Uterus (tissue), 4 donors: ENCODE measurements at regions of chr7 and their contacts with region 1.

Region 1: GRCh38 chr7:85614684-85615083 is 427.8 kb upstream of the SEMA3D start:
- DNase-seq: peak in 1 of 2 donors; percentile 12
- H3K4me3 ChIP-seq: no peak overlapping the region
- H3K27ac ChIP-seq: no peak overlapping the region
- H3K4me1 ChIP-seq: no peaks in the 10 kb centered on the region
- H3K27me3 ChIP-seq: no peaks in the 10 kb centered on the region
- CTCF ChIP-seq: no peak
- POLR2A ChIP-seq: no peak

Region 2: GRCh38 chr7:83970081-83970480 is 1644.6 kb before region 1 on chr7:
- intact Hi-C with region 1: loop called (anchors 5 kb)
- DNase-seq: no peak
- H3K4me3 ChIP-seq: no peak overlapping the region
- H3K27ac ChIP-seq: no peak overlapping the region
- H3K4me1 ChIP-seq: no peaks in the 10 kb centered on the region
- H3K27me3 ChIP-seq: no peaks in the 10 kb centered on the region
- CTCF ChIP-seq: no peak
- POLR2A ChIP-seq: no peak

Region 3: DNA sequence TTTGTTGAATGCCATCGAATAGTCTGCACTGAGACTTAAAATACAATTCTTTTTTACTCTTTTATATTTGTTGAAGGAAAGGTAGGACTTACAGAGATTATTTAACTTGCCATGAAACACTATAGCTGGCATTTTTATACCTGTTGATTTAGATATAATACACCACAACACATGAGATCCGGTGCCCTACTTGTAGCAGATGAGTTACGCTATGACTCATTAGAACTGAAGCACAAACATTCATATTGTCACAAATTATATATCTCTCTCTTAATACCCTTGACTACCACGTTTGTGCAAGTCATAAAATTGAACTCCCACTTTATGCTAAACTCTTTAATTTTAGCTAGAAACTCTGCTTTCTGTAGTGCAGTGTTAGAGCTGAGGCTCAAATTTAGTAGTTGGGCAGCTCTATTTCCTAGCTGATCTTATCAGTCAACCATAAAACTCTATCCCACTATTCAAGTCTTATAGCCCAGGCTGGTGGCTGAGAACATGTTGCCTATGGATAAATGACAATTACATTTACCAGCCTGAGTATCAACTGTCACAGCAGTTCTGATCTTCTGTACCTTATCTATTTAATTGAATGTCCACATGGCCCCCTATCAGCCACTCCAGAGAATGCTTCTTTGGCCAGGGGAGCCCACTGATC is 290.4 kb before region 1 on chr7:
- intact Hi-C with region 1: no loop called
- DNase-seq: no peak
- H3K4me3 ChIP-seq: no peak overlapping the region
- H3K27ac ChIP-seq: no peak overlapping the region
- H3K4me1 ChIP-seq: no peaks in the 10 kb centered on the region
- H3K27me3 ChIP-seq: no peaks in the 10 kb centered on the region
- CTCF ChIP-seq: no peak
- POLR2A ChIP-seq: no peak